HCT116 (cell line): ENCODE measurements at regions of chr3 and their contacts with region 1.

Region 1: GRCh38 chr3:31531992-31532586 is 636 bp upstream of the STT3B start:
- DNase-seq: peak; percentile 96
- ATAC-seq: peak; percentile 92
- H3K4me3 ChIP-seq: peak overlapping the region; percentile 74 to 88
- H3K27ac ChIP-seq: peak overlapping the region; percentile 96
- H3K4me1 ChIP-seq: peaks cover 12 to 32% of the 10 kb centered on the region in 2 experiments
- H3K27me3 ChIP-seq: peaks cover 4% of the 10 kb centered on the region; the same call in 1 of the 2 replicates
- CTCF ChIP-seq: no peak
- POLR2A ChIP-seq: peak; percentile 95
- RAD21 ChIP-seq: no peak

Region 2: DNA sequence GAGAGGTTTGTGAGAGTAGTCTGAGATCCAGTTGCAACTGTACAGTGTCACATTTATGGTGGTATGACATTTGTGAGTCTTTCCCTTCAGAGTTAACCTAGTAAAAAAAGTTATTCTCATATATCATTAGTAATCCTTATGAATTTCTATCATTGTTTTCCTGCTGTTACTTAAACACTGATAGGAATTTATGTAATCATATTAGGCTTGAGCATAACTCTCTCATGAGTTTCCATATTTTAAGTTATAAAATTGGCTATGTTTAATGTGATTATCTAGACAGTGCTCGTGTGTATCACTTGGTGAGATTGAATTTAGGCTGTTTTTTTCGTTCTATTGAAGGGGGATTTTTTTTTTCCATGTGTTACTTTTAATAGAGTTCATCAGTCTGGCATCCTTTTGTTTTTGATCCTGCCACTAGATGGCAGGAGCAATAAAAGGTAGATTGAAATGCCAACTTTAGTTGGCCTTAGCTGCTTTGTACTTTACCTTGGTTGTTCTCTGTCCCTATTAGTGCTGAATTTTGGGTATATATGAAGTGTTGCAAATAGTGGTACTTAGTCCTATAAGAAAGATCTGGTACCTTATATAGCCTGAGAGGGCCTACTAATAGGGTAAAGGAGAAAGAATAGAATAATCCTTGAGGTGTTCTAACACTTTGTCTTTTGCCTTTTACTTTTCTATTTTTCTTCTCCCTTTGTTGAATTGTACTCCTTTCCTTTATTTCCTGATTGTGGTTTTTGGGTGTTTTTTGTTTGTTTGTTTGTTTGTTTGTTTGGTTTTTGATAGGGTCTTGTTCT is 18.6 kb after region 1 on chr3:
- CTCF ChIA-PET with region 1: interaction called, 11 read pairs
- POLR2A ChIA-PET with region 1: interaction called, 9 read pairs
- RAD21 ChIA-PET with region 1: no interaction called
- intact Hi-C with region 1: no loop called
- DNase-seq: no peak
- ATAC-seq: peak; percentile 71
- H3K4me3 ChIP-seq: no peak overlapping the region
- H3K27ac ChIP-seq: no peak overlapping the region
- H3K4me1 ChIP-seq: peaks cover 10 to 33% of the 10 kb centered on the region in 2 experiments; a peak in 3 of 4 replicates
- H3K27me3 ChIP-seq: no peaks in the 10 kb centered on the region
- CTCF ChIP-seq: peak; percentile 28 to 74 (median 61); a peak in 5 of 6 replicates
- POLR2A ChIP-seq: no peak
- RAD21 ChIP-seq: peak; percentile 53